HepG2 (cell line): ENCODE measurements at regions of chr1 and their contacts with region 1.

Region 1: GRCh38 chr1:202009326-202010179 is 834 bp upstream of the ELF3 start:
- DNase-seq: peak; percentile 84
- ATAC-seq: peak; percentile 71
- H3K4me3 ChIP-seq: peak overlapping the region; percentile 46 to 93 (median 55)
- H3K27ac ChIP-seq: peak overlapping the region; percentile 72
- H3K4me1 ChIP-seq: peaks cover 71% of the 10 kb centered on the region
- H3K27me3 ChIP-seq: no peaks in the 10 kb centered on the region; a peak in 1 of 5 replicates
- CTCF ChIP-seq: peak; percentile 92
- EP300 ChIP-seq: no peak
- POLR2A ChIP-seq: no peak
- RAD21 ChIP-seq: peak; percentile 92

Region 2: GRCh38 chr1:202034683-202035462 is 25.3 kb after region 1 on chr1:
- CTCF ChIA-PET with region 1: no interaction called
- POLR2A ChIA-PET with region 1: interaction called, 92 read pairs
- in situ Hi-C with region 1: no loop called
- intact Hi-C with region 1: loop called (anchors 1 kb)
- DNase-seq: peak; percentile 93
- ATAC-seq: peak; percentile 99
- H3K4me3 ChIP-seq: peak overlapping the region; percentile 54 to 75 (median 57)
- H3K27ac ChIP-seq: peak overlapping the region; percentile 75
- H3K4me1 ChIP-seq: peaks cover 78% of the 10 kb centered on the region
- H3K27me3 ChIP-seq: no peaks in the 10 kb centered on the region
- CTCF ChIP-seq: 0 out of 2 replicates have a peak, but pooled peaks have one; percentile 3
- EP300 ChIP-seq: peak in 1 of 2 experiments; percentile 69; a peak in 1 of 4 replicates
- POLR2A ChIP-seq: peak; percentile 39 to 58; a peak in 3 of 4 replicates
- RAD21 ChIP-seq: no peak

Region 3: DNA sequence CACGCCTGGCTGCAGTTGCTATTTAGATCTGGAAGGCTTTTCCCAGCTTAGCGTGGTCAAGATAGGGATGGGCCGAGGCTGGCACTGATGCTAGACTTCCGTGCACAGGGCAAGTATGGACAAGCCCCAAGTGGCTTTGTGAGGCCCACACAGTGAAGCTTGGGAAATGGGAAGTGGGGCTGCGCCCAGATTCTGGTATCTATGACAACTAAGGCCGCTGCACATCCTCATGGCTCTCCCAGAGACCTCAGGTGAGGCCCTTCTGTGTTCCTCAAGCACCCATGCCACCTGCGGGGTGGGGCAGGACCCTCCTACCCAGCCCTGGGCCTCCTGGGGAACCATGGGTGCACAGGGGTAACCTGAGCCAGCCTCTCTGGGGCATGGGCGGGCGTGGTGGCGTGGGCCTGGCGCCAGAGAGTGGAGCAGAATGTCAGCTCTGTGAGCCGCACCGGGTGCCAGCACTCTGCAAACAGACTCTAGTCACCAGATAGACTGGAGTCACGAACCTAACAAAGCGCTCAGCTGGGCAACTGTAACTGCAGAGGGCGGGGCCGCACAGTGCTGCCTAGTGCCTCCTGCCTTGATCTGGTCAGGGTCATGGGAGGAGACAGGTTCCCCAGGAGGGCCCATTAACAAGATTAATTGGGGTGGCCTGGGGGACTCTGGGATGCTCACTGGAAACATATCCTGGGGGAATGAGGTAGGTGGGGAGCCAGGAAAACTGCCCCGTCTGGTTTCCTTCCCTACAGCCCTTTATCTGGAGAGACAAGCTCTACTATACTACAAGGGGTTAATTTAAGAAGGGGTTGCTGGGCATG is 47.3 kb after region 1 on chr1:
- CTCF ChIA-PET with region 1: no interaction called
- POLR2A ChIA-PET with region 1: interaction called, 54 read pairs
- in situ Hi-C with region 1: no loop called
- intact Hi-C with region 1: no loop called
- DNase-seq: peak; percentile 89
- ATAC-seq: peak; percentile 88
- H3K4me3 ChIP-seq: peak overlapping the region in 1 of 3 experiments; percentile 59; a peak in 3 of 6 replicates
- H3K27ac ChIP-seq: peak overlapping the region; percentile 60
- H3K4me1 ChIP-seq: peaks cover 66% of the 10 kb centered on the region
- H3K27me3 ChIP-seq: no peaks in the 10 kb centered on the region
- CTCF ChIP-seq: peak; percentile 21; the same call in 1 of the 2 replicates
- EP300 ChIP-seq: 0 out of 4 replicates have a peak, but pooled peaks of 1 of the 2 experiments have one; percentile 48
- POLR2A ChIP-seq: peak in 1 of 2 experiments; percentile 46; a peak in 1 of 4 replicates
- RAD21 ChIP-seq: no peak

Region 4: GRCh38 chr1:202076050-202076511 is 66.5 kb after region 1 on chr1:
- CTCF ChIA-PET with region 1: no interaction called
- POLR2A ChIA-PET with region 1: interaction called, 118 read pairs
- in situ Hi-C with region 1: no loop called
- intact Hi-C with region 1: no loop called
- DNase-seq: peak; percentile 68
- ATAC-seq: peak; percentile 79
- H3K4me3 ChIP-seq: peak overlapping the region; percentile 5 to 58 (median 34); a peak in 5 of 6 replicates
- H3K27ac ChIP-seq: peak overlapping the region; percentile 30
- H3K4me1 ChIP-seq: peaks cover 57% of the 10 kb centered on the region
- H3K27me3 ChIP-seq: no peaks in the 10 kb centered on the region
- CTCF ChIP-seq: no peak
- EP300 ChIP-seq: peak in 1 of 2 experiments; percentile 48; a peak in 1 of 4 replicates
- POLR2A ChIP-seq: peak in 1 of 2 experiments; percentile 59; a peak in 1 of 4 replicates
- RAD21 ChIP-seq: no peak

Region 5: DNA sequence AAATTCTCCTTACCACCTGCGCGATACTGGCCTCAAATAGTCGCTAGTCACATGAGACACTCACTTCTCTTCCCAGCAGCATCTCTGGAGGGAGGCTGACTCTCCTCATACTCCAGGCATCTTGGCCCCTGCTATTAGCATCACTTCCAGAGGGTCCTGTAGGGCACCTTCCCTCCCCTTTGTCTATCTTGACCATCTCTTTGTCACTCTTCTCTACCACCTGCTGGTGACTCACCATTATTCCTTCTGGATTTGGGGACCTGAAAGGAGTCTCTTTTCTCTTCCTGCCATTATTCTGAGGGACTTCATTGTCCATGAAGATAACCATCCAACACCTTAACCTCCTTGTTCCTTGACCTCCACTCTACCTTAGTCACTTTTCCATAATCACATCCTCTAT is 81.4 kb after region 1 on chr1:
- CTCF ChIA-PET with region 1: interaction called, 20 read pairs
- POLR2A ChIA-PET with region 1: interaction called, 118 read pairs
- in situ Hi-C with region 1: no loop called
- intact Hi-C with region 1: loop called (anchors 1 kb)
- DNase-seq: peak; percentile 45
- ATAC-seq: peak; percentile 42
- H3K4me3 ChIP-seq: no peak overlapping the region
- H3K27ac ChIP-seq: no peak overlapping the region
- H3K4me1 ChIP-seq: peaks cover 48% of the 10 kb centered on the region
- H3K27me3 ChIP-seq: no peaks in the 10 kb centered on the region
- CTCF ChIP-seq: peak; percentile 71
- EP300 ChIP-seq: no peak
- POLR2A ChIP-seq: no peak
- RAD21 ChIP-seq: peak; percentile 58

Region 6: GRCh38 chr1:202112839-202113672 is 103.5 kb after region 1 on chr1:
- CTCF ChIA-PET with region 1: interaction called, 69 read pairs
- POLR2A ChIA-PET with region 1: interaction called, 30 read pairs
- in situ Hi-C with region 1: loop called (anchors 5 kb)
- intact Hi-C with region 1: no loop called
- DNase-seq: no peak
- ATAC-seq: peak; percentile 58
- H3K4me3 ChIP-seq: no peak overlapping the region; a peak in 1 of 6 replicates
- H3K27ac ChIP-seq: no peak overlapping the region
- H3K4me1 ChIP-seq: peaks cover 64% of the 10 kb centered on the region
- H3K27me3 ChIP-seq: peaks cover 0 to 2% of the 10 kb centered on the region in 2 experiments; a peak in 1 of 5 replicates
- CTCF ChIP-seq: no peak
- EP300 ChIP-seq: no peak
- POLR2A ChIP-seq: no peak
- RAD21 ChIP-seq: no peak

Region 7: GRCh38 chr1:202143768-202144401 is 134.3 kb after region 1 on chr1:
- CTCF ChIA-PET with region 1: no interaction called
- POLR2A ChIA-PET with region 1: interaction called, 11 read pairs
- in situ Hi-C with region 1: no loop called
- intact Hi-C with region 1: no loop called
- DNase-seq: no peak
- ATAC-seq: peak; percentile 21
- H3K4me3 ChIP-seq: peak overlapping the region; percentile 65 to 80 (median 68)
- H3K27ac ChIP-seq: no peak overlapping the region
- H3K4me1 ChIP-seq: peaks cover 28% of the 10 kb centered on the region
- H3K27me3 ChIP-seq: peaks cover 0 to 43% of the 10 kb centered on the region in 2 experiments; a peak in 4 of 5 replicates
- CTCF ChIP-seq: no peak
- EP300 ChIP-seq: no peak
- POLR2A ChIP-seq: no peak
- RAD21 ChIP-seq: no peak